ENCODE measurements at regions of chr3 and their contacts with region 1.

Region 1: DNA sequence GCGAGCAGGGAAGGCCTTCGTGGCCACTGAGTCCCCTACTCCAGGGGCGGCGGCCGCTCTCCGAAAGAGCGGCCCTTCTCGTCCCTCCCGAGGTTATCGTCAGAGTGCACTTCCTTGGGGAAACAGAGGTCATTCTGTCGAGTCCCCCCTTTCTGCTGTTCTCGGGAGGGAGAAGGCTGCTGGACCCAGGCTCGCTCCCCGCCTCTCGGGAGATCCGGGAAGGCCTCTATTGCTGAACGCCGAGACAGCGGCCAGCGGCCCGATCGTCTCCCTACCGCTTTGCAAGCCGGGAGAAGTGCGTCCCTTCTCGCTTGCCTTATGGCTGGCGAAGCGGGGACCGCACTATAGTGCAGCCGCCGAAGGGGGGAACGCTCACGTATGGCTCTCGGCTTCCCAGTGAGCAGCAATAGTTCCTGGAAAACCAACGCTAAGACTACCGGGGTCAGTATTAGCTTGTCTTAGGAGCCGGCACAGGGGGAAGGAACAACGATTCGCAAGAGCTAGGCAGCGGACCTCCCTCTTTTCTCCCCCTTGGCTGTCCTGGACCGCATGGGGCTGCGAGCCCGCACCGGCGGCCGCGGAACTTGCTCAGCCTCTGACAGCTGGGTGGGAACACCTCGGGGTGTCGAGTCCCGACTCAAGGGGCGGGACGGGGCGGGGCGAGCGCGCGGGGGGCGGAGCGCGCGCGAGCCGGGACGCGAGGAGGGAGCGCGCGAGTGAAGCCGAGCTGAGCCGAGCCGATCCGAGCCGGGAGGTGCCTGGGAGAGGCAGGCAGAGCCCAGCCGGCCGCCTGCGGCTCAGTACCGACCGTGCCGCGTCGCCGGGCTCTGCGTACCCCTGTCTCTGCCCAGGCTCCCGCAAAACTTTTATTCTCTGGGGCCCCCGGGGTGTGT is 930 bp upstream of the PPM1L start:
- DNase-seq: peak; percentile 88 to 99 (median 94)

Region 2: GRCh38 chr3:160417311-160417710 is 337.8 kb before region 1 on chr3:
- intact Hi-C with region 1: no loop called
- DNase-seq: no peak

Region 3: GRCh38 chr3:160565442-160566403 is 189.4 kb before region 1 on chr3 and contains the start of gene KPNA4:
- intact Hi-C with region 1: loop called (anchors 1 kb)
- DNase-seq: peak; percentile 95 to 99 (median 96)

Region 4: DNA sequence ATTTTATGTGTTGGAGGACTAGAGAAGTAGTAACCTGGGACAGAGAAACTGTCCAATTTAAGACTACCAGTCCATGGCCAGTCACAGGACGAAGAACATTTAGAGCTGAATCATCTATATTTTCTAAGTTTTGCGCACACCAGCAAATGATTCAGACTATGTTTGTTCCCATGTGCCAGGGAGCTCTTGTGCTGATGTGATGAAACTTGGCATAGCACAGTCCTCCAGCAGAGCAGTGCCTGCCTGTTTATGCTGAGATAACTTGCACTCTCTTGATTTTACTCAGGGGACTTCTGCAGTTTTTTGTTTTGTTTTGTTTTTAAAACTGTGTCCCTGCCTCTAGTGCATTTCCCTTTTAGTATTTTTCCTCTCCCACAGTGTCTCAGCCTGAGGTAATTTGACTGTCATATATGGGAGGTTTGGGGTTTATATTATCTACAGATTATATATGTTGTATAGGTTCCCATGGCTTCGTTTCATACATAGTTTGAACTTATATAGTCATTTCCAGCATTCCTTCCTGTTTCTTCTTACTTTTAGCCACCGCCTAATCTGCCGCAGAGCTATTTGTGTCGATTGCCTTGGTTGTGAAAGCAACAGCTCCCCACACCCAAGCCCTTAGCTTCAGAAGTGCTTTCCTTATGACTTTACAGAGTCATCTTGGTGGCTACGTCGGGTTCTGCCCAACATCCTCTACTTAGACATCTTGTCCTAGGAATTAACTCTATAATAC is 46.5 kb after region 1 on chr3:
- intact Hi-C with region 1: loop called (anchors 5 kb)
- DNase-seq: peak in 4 of 10 donors; percentile 18 to 67 (median 47)

Region 5: GRCh38 chr3:160929595-160929994 is 174.5 kb after region 1 on chr3:
- intact Hi-C with region 1: loop called (anchors 5 kb)
- DNase-seq: peak in 6 of 10 donors; percentile 11 to 89 (median 50)

Region 6: DNA sequence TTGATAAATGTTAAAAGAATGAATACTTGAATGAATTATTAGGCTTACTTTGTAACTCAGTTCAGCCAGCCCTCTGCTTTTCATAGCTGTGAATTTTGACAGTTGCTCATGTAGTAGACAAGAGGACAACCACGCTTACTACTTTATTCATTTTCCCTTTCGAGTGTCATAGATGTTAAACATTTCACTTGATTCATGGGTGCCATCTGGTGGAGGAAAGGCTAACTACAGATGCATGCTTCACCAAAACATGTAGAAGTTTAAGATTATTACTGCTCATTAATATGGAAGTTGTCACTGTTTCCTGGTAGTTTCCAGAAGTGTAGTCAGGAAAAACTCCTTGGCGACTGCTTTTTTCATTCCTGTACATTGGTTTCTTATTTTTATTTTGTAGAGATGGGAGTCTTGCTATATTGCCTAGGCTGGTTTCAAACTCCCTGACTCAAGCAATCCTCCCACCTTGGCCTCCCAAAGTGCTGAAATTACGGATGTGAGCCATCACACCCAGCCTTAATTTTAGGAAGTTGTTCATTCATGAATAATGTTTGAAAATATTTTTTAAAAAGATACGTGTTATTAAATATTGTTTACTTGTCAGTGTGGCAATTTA is 186.9 kb after region 1 on chr3:
- intact Hi-C with region 1: loop called (anchors 5 kb)
- DNase-seq: peak in 5 of 10 donors; percentile 27 to 78 (median 70)

Region 7: DNA sequence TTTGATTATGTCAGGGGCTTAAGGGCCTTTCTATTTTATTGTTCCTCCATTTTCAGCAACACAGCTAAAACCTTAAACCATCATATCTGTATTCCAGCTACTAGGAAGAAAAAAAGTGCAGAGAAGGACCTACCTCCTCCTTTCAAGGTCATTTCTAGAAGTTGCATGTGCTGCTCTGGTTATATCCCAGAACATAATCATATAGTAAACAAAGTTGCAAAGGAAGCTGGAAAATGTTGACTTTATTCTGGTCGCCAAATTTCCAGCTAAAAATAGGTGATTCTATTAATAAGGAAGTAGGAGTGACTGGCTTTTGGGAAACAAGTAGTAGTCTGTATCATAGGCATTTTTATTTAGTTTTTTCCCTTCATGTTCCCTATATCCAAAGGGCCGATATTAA is 371.4 kb after region 1 on chr3:
- intact Hi-C with region 1: no loop called
- DNase-seq: no peak

Region 8: DNA sequence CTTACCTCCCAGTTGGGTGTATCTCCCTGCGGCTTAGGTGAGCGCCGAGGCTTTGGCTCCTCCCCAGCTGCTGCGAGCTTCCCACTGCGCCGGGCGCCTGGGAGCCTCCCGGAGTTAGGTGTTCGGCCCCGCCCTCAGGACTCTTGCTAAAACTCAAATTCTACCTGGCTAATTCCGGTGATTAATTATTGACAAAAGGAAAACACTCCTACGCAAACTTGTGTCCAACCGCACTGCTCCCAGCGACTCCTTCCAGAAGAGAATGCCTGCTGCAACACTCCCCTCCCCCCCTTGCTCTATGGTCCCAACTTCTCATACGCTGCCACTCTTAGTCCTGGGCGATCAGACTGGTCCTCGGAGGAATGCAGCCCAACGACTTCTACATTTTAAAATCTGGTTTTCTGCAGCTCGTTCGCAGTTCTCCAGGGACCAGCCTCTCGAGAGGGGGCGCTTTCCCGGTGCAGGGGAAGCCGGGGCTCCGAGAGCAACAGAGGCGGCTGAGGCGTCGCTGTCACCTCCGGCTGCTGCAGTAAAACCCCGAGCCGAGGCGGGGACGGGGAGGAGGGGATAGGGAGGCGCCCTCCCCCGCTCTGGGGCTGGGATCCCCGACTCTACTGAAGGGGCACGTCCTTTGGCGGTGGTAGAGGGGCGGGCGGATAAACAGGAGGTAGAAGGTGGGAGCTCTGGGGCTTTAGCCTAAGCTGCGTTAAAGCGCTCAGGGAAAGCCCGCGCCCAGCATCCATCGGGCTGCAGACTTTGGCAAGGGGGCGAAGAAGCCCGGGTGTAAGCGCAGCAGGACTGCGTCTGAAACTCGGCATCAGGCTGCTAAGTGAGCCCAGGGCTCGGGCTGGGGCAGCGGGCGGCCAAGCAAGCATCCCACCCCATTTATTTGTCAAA is 616.6 kb after region 1 on chr3 and contains the start of gene SPTSSB:
- intact Hi-C with region 1: no loop called
- DNase-seq: peak; percentile 24 to 93 (median 66)

Measured in posterior cingulate gyrus (tissue), 11 donors.